Gastrocnemius medialis (tissue), 4 donors: ENCODE measurements at regions of chr3 and their contacts with region 1.

Region 1: DNA sequence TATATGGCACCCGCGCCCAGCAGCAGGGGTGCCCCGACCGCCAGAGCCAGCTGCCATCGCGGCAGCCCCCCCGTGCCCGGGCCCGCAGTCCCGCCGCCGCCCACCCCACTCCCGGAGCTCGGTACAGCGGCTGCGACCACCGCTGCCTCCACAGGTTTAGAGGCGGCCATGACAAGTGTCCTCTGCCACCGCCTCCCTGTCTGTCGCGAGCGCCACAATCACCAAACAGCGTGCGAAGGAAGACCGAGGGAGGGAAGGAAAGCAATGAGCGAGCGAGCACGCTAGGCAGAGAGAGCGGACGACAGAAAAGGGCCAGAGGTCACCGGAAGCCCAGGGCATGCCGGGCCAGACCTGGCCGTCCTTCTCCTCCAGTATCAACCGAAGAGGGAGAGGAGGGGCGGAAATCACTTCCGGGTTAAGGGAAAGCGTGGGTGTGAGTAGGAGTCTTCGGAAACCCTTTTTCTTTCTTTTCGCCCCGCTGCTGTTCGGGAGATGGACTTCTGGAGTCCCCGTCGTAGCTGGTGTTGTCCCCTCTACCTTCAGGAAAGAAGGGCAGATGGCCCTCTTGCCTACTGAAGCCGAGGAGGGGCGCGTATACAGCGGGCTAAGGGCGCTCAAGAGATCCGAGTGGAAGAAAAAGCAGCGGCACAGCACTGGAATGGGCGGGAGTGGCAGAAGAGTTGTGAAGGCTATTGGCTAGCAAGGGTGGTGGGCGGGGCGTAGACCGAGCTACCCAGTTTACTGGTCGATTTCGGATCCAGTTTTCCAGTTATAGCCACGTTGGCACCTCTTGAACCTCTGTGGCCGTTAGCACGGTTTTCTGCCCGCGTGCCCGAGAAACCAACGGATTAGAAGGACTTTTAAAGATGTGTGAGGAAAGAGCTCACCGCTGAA is at the starts of genes LNP1 and TOMM70:
- DNase-seq: peak; percentile 97 to 98
- ATAC-seq: peak; percentile 95 to 97
- H3K4me3 ChIP-seq: peak within 1 kb of the TSS; percentile 84 to 96 (median 92)
- H3K27ac ChIP-seq: peak within 1 kb of the TSS; percentile 84 to 99 (median 97)
- H3K4me1 ChIP-seq: peaks cover 53 to 57% of the 10 kb centered on the region in 2 donors
- H3K27me3 ChIP-seq: no peaks in the 10 kb centered on the region
- CTCF ChIP-seq: no peak
- POLR2A ChIP-seq: peak; percentile 47 to 81
- total RNA-seq, gene LNP1: 1.1 to 3.7 (median 1.9) TPM
- total RNA-seq, gene TOMM70: 57.6 to 82.2 (median 64.3) TPM

Region 2: GRCh38 chr3:100334488-100335351 is 66.3 kb before region 1 on chr3 and contains the start of gene NIT2:
- in situ Hi-C with region 1: no loop called
- intact Hi-C with region 1: loop called (anchors 1 kb)
- DNase-seq: peak; percentile 69 to 85
- ATAC-seq: peak; percentile 89 to 91
- H3K4me3 ChIP-seq: peak within 1 kb of the TSS; percentile 59 to 68 (median 64)
- H3K27ac ChIP-seq: peak within 1 kb of the TSS; percentile 85 to 89 (median 88)
- H3K4me1 ChIP-seq: peaks cover 0 to 10% of the 10 kb centered on the region in 2 donors
- H3K27me3 ChIP-seq: no peaks in the 10 kb centered on the region
- CTCF ChIP-seq: peak in 1 of 5 experiments; percentile 15
- POLR2A ChIP-seq: peak; percentile 76 to 78
- total RNA-seq, gene NIT2: 13.5 to 45.2 (median 24.2) TPM

Region 3: GRCh38 chr3:100492059-100493006 is 91.3 kb after region 1 on chr3 and contains the start of gene TMEM45A:
- in situ Hi-C with region 1: no loop called
- intact Hi-C with region 1: loop called (anchors 2 kb)
- DNase-seq: peak; percentile 83 to 94
- ATAC-seq: peak; percentile 97
- H3K4me3 ChIP-seq: peak within 1 kb of the TSS; percentile 66 to 79 (median 72)
- H3K27ac ChIP-seq: peak within 1 kb of the TSS; percentile 42 to 65 (median 60)
- H3K4me1 ChIP-seq: no peaks in the 10 kb centered on the region
- H3K27me3 ChIP-seq: no peaks in the 10 kb centered on the region
- CTCF ChIP-seq: no peak
- POLR2A ChIP-seq: peak in 1 of 2 donors; percentile 59
- total RNA-seq, gene TMEM45A: 3.5 to 7.0 (median 4.1) TPM

Region 4: DNA sequence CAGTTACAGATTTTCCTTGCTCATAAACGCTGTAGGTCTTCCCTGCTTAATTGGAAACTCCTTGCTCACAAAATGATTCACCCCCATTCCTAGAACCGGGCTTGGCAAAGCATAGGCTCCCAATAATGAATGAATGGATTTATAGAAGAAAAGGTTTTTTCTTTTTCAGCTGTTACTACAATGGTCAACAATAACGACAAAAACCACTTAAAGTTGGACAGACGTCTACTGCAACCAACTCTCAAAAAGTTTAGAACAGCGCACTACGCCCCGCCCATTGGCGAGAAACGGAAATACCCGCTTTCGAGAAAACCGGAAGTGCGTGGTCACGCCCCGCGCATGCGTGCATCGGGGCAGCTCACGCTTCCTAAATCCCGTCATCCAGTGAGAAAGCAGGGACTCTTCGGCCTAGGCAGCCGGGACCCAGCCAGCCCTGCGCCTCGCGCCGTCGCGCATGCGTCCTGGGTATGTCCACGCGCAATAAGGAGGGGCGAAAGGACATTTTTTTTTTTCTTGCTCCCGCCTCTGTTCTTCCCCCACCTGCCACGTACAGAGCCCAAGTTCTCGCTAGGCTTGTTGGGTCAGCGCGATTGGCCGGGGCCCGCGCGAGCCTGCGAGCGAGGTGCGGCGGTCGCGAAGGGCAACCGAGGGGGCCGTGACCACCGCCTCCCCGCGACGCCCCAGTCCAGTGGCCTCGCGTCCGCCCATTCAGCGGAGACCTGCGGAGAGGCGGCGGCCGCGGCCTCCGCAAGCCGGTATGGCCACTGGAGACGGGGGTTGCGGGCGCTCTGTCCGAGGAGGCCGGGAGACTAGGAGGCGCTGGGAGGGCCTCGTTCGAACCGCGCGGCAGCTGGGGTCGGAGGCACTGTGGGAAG is 308.2 kb after region 1 on chr3 and contains the start of gene TFG:
- in situ Hi-C with region 1: no loop called
- intact Hi-C with region 1: loop called (anchors 5 kb)
- DNase-seq: peak; percentile 95 to 98
- ATAC-seq: peak; percentile 95 to 98
- H3K4me3 ChIP-seq: peak within 1 kb of the TSS; percentile 73 to 97 (median 86)
- H3K27ac ChIP-seq: peak within 1 kb of the TSS; percentile 92 to 99 (median 96)
- H3K4me1 ChIP-seq: peaks cover 18 to 24% of the 10 kb centered on the region in 2 donors
- H3K27me3 ChIP-seq: no peaks in the 10 kb centered on the region
- CTCF ChIP-seq: no peak
- POLR2A ChIP-seq: peak; percentile 81 to 84
- total RNA-seq, gene TFG: 57.2 to 77.9 (median 67.3) TPM

Region 5: DNA sequence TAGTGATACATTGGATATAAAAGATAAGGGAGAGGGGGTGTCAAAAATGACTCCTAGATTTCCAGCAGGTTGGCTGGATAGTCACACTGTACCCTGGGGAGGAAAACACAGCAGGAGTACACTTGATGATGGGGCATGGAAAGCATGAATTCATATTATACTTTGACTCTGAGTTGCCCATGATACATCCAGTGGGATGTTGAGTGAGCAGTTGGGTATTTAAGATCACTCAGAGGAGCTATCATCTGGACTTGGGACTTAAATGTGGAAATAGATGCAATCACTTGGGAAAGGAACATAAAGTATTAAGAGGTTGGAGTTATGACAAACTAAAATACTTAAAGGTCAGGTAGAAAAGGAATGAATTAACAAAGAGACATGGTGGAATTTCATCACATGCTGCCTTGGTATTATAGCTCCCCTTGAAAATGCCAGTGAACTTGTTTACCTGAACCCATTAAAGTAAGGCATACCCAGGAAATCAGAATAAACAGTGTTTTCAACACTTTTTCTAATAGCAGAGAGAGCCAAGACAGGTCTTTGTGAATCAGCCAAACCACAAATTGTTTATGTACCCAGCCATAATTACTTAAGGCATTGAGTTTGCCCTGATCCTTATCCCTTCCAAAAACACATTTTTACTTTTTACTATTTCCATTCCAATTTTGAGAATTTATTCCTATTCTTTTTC is 642.1 kb after region 1 on chr3:
- in situ Hi-C with region 1: no loop called
- intact Hi-C with region 1: no loop called
- DNase-seq: no peak
- ATAC-seq: no peak
- H3K4me3 ChIP-seq: no peak overlapping the region
- H3K27ac ChIP-seq: no peak overlapping the region
- H3K4me1 ChIP-seq: no peaks in the 10 kb centered on the region
- H3K27me3 ChIP-seq: no peaks in the 10 kb centered on the region
- CTCF ChIP-seq: no peak
- POLR2A ChIP-seq: no peak